PC-3 (cell line): ENCODE measurements at regions of chr19 and their contacts with region 1.

Region 1: DNA sequence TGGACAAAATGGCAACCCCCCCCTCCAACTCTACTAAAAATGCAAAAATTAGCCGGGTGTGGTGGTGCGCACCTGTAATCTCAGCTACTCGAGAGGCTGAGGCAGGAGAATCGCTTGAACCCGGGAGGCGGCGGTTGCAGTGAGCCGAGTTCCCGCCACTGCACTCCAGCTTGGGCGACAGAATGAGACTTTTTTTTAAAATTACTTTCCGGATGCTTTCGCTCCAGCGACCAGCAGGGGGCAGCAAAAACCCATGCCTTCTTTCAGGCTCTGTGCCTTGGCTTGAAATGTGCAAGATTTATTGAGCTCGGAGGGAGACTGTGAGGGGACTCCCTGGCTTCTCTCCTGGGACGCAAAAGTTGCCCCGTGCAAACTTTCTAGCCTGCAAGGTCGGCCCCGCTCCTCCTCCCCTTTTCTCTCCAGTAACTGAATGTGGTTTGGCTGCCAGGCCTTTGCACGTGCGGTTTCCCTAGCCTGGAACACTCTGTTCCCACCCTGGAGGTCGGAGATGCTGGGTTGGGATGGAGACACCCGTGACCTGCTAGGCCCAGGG is 61.4 kb upstream of the NFIC start:
- DNase-seq: peak; percentile 77
- ATAC-seq: no peak
- H3K4me3 ChIP-seq: no peak overlapping the region
- H3K27ac ChIP-seq: no peak overlapping the region
- H3K4me1 ChIP-seq: no peaks in the 10 kb centered on the region
- H3K27me3 ChIP-seq: no peaks in the 10 kb centered on the region
- CTCF ChIP-seq: peak; percentile 70

Region 2: GRCh38 chr19:3234800-3235199 is 70.1 kb before region 1 on chr19:
- CTCF ChIA-PET with region 1: no interaction called
- POLR2A ChIA-PET with region 1: interaction called, 18 read pairs
- intact Hi-C with region 1: no loop called
- DNase-seq: no peak
- ATAC-seq: no peak
- H3K4me3 ChIP-seq: no peak overlapping the region
- H3K27ac ChIP-seq: no peak overlapping the region
- H3K4me1 ChIP-seq: no peaks in the 10 kb centered on the region
- H3K27me3 ChIP-seq: no peaks in the 10 kb centered on the region
- CTCF ChIP-seq: peak; percentile 34; the same call in 1 of the 2 replicates

Region 3: DNA sequence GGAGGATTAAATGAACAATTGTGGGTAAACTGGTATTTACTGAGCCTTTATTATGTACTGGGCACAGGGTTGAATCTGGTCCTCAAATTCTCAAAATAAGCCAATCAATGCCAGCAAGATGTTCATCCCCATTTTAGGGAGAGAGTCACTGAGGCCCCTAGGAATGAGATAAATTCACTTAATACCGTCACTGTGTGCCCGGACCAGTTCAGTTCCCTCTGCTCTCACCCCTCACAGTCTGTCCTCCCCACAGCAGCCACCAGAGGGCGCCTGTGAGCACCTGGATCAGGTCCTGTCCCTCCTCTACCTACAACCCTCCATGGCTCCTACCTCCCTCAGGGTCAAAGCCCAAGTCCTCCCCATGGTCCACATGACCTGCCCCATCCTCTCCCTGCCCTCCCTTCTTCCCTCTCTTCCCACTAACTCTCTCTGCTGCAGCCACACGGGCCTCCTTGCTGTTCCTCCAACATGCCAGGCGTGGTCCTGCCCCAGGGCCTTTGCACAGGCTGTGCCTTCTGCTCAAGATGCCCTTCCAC is 19.4 kb after region 1 on chr19:
- CTCF ChIA-PET with region 1: no interaction called
- POLR2A ChIA-PET with region 1: no interaction called
- intact Hi-C with region 1: no loop called
- DNase-seq: peak; percentile 51
- ATAC-seq: peak; percentile 43
- H3K4me3 ChIP-seq: no peak overlapping the region
- H3K27ac ChIP-seq: no peak overlapping the region
- H3K4me1 ChIP-seq: peaks cover 5% of the 10 kb centered on the region; the same call in 1 of the 2 replicates
- H3K27me3 ChIP-seq: no peaks in the 10 kb centered on the region
- CTCF ChIP-seq: peak; percentile 77

Region 4: DNA sequence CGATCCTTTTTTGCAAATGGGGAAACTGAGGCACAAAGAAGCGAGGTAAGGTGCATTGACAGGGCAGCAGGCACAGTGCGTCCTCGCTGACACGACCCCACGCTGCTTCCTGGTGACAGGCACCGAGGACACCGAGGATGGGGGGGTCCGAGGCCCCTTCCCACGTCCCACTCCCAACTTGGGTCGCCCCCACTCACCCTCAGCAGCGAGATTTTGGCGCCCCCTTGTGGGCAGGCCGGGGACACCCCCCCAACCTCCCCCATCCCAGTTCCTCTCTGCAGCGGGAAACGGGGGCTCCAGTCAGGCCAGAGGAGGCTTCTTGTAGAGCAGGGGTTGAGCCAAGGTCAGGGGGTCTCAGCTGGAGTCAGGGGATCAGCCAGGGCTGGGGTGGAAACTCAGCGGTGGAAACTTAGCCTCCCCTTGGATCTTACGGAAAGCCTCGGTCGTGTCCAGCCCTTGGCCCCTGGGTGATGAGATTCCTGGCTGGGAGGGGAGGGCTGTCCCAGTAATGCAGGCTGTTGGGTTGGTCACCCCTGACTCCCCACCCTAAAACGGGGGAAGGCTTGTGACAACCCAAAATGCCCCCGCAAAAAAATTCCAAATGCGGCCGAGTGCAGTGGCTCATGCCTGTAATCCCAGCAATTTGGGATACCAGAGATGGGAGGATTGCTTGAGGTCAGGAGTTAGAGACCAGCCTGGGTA is 167.2 kb after region 1 on chr19:
- CTCF ChIA-PET with region 1: no interaction called
- POLR2A ChIA-PET with region 1: no interaction called
- intact Hi-C with region 1: loop called (anchors 2 kb)
- DNase-seq: peak; percentile 8
- ATAC-seq: peak; percentile 26; the same call in 1 of the 2 replicates
- H3K4me3 ChIP-seq: no peak overlapping the region
- H3K27ac ChIP-seq: no peak overlapping the region
- H3K4me1 ChIP-seq: no peaks in the 10 kb centered on the region
- H3K27me3 ChIP-seq: no peaks in the 10 kb centered on the region
- CTCF ChIP-seq: peak; percentile 81

Region 5: DNA sequence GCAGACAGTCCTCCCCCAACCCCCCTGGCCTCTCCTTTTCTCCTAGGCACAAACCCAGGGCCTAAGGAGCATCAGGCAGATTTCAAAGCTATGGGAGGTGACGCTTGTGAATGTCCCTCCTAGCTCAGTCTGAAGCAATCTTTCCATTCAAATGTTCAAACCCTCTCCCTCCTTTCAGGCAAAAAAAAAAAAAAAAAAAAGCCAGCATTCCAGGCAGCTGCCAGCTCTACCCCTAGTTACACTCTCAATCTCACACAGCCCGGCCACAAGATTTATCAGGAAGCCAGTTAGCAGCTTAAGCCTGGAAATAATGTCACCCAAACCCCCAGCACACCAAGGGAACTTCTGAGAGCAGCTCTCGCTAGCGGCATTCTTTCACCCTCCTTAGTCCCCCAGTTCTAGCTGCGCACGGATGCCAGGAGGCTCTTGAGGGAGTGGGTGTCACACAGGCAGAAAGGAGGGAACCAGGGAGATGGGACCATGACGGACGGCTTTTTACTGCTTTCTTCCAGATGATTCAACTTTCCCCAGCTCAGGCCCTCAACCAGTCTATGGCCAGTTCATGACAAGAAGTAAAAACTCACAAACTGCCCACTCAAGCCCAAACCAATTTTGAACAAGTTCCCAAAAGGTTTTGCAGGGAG is 1089.1 kb after region 1 on chr19:
- CTCF ChIA-PET with region 1: interaction called, 17 read pairs
- POLR2A ChIA-PET with region 1: no interaction called
- intact Hi-C with region 1: no loop called
- DNase-seq: no peak
- ATAC-seq: no peak
- H3K4me3 ChIP-seq: no peak overlapping the region
- H3K27ac ChIP-seq: no peak overlapping the region
- H3K4me1 ChIP-seq: peaks cover 11% of the 10 kb centered on the region
- H3K27me3 ChIP-seq: no peaks in the 10 kb centered on the region
- CTCF ChIP-seq: no peak